ENCODE measurements at regions of chr22 and their contacts with region 1.

Region 1: DNA sequence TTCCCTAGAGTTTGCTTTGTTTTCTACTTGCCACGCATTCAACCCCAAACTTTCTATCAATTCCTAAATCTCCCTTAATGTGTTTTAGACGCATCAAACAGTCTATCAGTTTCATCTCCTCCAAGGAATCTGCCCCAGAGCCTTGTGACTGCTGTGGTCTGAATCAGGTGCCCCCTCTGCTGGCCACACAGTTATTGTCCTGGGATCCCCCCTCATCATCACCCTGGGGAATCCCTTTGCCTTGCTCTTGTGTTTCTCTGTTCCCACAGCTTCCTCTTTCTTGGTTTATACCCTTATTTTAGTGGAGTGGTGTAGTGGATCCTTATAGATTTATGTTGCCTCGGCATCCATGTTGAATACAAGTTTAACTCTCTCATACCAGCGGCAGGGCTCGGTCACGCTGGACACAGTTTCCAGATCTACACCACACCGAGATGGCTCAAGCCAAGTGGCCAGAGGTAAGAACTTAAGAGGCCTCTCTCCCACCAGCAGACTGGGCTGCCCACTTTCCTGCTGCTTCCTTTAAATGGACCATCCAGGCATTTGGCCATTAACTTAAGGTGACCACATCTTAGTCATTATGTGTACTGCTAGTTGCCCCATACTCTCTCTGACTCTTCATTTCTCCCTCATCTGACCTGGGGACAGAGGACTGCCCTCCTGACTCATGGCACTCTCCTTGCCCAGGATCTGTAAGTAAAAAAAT is 8.2 kb downstream of the UPB1 start:
- DNase-seq: peak; percentile 61
- H3K4me3 ChIP-seq: no peak overlapping the region
- H3K27ac ChIP-seq: no peak overlapping the region
- H3K4me1 ChIP-seq: peaks cover 0 to 20% (median 14%) of the 10 kb centered on the region in 4 donors
- H3K27me3 ChIP-seq: no peaks in the 10 kb centered on the region
- CTCF ChIP-seq: peak; percentile 43 to 48 (median 44)
- EP300 ChIP-seq: no peak
- POLR2A ChIP-seq: no peak

Region 2: DNA sequence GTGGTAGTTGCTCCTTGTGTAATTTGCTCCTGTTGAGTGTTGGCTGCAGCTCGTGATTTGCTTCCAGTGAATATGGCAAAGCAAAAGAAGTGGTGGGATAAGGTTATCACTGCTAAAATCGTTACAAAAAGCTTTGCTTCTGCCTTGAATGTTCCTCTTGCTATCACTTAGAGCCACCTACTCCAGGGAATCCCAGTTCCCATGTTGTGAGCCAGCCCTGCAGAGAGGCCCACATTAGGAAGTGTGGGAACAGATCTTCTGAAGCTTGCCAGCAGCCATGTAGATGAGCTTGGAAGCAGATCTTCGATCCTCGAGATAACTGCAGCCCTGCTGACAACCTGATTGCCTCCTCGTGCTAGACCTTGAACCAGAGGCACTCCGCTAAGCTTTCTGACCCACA is 161.7 kb before region 1 on chr22:
- in situ Hi-C with region 1: no loop called
- intact Hi-C with region 1: no loop called
- DNase-seq: no peak
- H3K4me3 ChIP-seq: no peak overlapping the region
- H3K27ac ChIP-seq: no peak overlapping the region
- H3K4me1 ChIP-seq: peaks cover 0 to 18% (median 9%) of the 10 kb centered on the region in 4 donors
- H3K27me3 ChIP-seq: no peaks in the 10 kb centered on the region
- CTCF ChIP-seq: no peak
- EP300 ChIP-seq: no peak
- POLR2A ChIP-seq: no peak

Region 3: GRCh38 chr22:24410110-24410856 is 93.0 kb before region 1 on chr22:
- in situ Hi-C with region 1: loop called in 1 of 4 experiments (anchors 10 kb)
- intact Hi-C with region 1: no loop called
- DNase-seq: no peak
- H3K4me3 ChIP-seq: no peak overlapping the region
- H3K27ac ChIP-seq: no peak overlapping the region
- H3K4me1 ChIP-seq: peaks cover 0 to 2% (median 0%) of the 10 kb centered on the region in 4 donors
- H3K27me3 ChIP-seq: no peaks in the 10 kb centered on the region
- CTCF ChIP-seq: no peak
- EP300 ChIP-seq: no peak
- POLR2A ChIP-seq: no peak

Region 4: GRCh38 chr22:24423519-24424000 is 79.7 kb before region 1 on chr22:
- in situ Hi-C with region 1: loop called in 1 of 4 experiments (anchors 10 kb)
- intact Hi-C with region 1: loop called (anchors 10 kb)
- DNase-seq: peak; percentile 56
- H3K4me3 ChIP-seq: peak overlapping the region; percentile 32 to 54 (median 45)
- H3K27ac ChIP-seq: peak overlapping the region in 3 of 4 donors; percentile 5 to 12 (median 7)
- H3K4me1 ChIP-seq: peaks cover 0 to 13% (median 11%) of the 10 kb centered on the region in 4 donors
- H3K27me3 ChIP-seq: peaks cover 25% of the 10 kb centered on the region
- CTCF ChIP-seq: peak; percentile 43 to 94 (median 81)
- EP300 ChIP-seq: no peak
- POLR2A ChIP-seq: no peak